Activated CD4-positive, alpha-beta T cell treated with anti-CD3 and anti-CD28 coated beads for 36 hours (primary cell): ENCODE measurements at regions of chr6 and their contacts with region 1.

Region 1: GRCh38 chr6:107917451-107918375 is 40.3 kb downstream of the SEC63 start:
- DNase-seq: peak; percentile 29
- ATAC-seq: peak; percentile 89
- H3K4me3 Mint-ChIP-seq: no peak overlapping the region
- H3K27ac Mint-ChIP-seq: peak overlapping the region; percentile 26
- H3K4me1 Mint-ChIP-seq: peaks cover 14% of the 10 kb centered on the region
- H3K27me3 Mint-ChIP-seq: no peaks in the 10 kb centered on the region

Region 2: GRCh38 chr6:107964671-107965340 is 47.1 kb after region 1 on chr6:
- CTCF ChIA-PET with region 1: no interaction called
- POLR2A ChIA-PET with region 1: interaction called, 3 read pairs
- intact Hi-C with region 1: loop called in 1 of 2 experiments (anchors 1 kb)
- DNase-seq: peak; percentile 90
- ATAC-seq: peak; percentile 96
- H3K4me3 Mint-ChIP-seq: no peak overlapping the region
- H3K27ac Mint-ChIP-seq: peak overlapping the region; percentile 88
- H3K4me1 Mint-ChIP-seq: peaks cover 25% of the 10 kb centered on the region
- H3K27me3 Mint-ChIP-seq: peaks cover 2% of the 10 kb centered on the region